Sigmoid colon (tissue), 7 donors: ENCODE measurements at regions of chr12 and their contacts with region 1.

Region 1: GRCh38 chr12:57069523-57069922 is 9.1 kb downstream of the NEMP1 start:
- DNase-seq: peak; percentile 87
- H3K4me3 ChIP-seq: no peak overlapping the region
- H3K27ac ChIP-seq: peak overlapping the region; percentile 71 to 85 (median 81)
- H3K4me1 ChIP-seq: peaks cover 0 to 32% (median 17%) of the 10 kb centered on the region in 4 donors
- H3K27me3 ChIP-seq: no peaks in the 10 kb centered on the region
- CTCF ChIP-seq: peak; percentile 86 to 96 (median 91)
- EP300 ChIP-seq: no peak
- POLR2A ChIP-seq: no peak

Region 2: GRCh38 chr12:57111031-57111734 is 41.7 kb after region 1 on chr12 and contains the start of gene STAT6:
- intact Hi-C with region 1: loop called (anchors 1 kb)
- DNase-seq: peak; percentile 94
- H3K4me3 ChIP-seq: peak within 1 kb of the TSS; percentile 59 to 83 (median 68)
- H3K27ac ChIP-seq: peak within 1 kb of the TSS; percentile 94 to 99 (median 98)
- H3K4me1 ChIP-seq: peaks cover 0 to 52% (median 47%) of the 10 kb centered on the region in 4 donors
- H3K27me3 ChIP-seq: no peaks in the 10 kb centered on the region
- CTCF ChIP-seq: peak in 1 of 4 experiments; percentile 15
- EP300 ChIP-seq: no peak
- POLR2A ChIP-seq: peak; percentile 62 to 70
- total RNA-seq, gene STAT6: 105 to 163 (median 113) TPM

Region 3: GRCh38 chr12:57124259-57124877 is 54.8 kb after region 1 on chr12:
- intact Hi-C with region 1: loop called (anchors 5 kb)
- DNase-seq: peak; percentile 88
- H3K4me3 ChIP-seq: no peak overlapping the region
- H3K27ac ChIP-seq: no peak overlapping the region
- H3K4me1 ChIP-seq: peaks cover 0 to 10% (median 9%) of the 10 kb centered on the region in 4 donors
- H3K27me3 ChIP-seq: no peaks in the 10 kb centered on the region
- CTCF ChIP-seq: peak; percentile 92 to 96 (median 96)
- EP300 ChIP-seq: no peak
- POLR2A ChIP-seq: no peak

Region 4: GRCh38 chr12:57182921-57183790 is 113.6 kb after region 1 on chr12:
- intact Hi-C with region 1: loop called (anchors 2 kb)
- DNase-seq: peak; percentile 88
- H3K4me3 ChIP-seq: no peak overlapping the region
- H3K27ac ChIP-seq: no peak overlapping the region
- H3K4me1 ChIP-seq: no peaks in the 10 kb centered on the region
- H3K27me3 ChIP-seq: no peaks in the 10 kb centered on the region
- CTCF ChIP-seq: peak; percentile 83 to 91 (median 86)
- EP300 ChIP-seq: no peak
- POLR2A ChIP-seq: no peak

Region 5: DNA sequence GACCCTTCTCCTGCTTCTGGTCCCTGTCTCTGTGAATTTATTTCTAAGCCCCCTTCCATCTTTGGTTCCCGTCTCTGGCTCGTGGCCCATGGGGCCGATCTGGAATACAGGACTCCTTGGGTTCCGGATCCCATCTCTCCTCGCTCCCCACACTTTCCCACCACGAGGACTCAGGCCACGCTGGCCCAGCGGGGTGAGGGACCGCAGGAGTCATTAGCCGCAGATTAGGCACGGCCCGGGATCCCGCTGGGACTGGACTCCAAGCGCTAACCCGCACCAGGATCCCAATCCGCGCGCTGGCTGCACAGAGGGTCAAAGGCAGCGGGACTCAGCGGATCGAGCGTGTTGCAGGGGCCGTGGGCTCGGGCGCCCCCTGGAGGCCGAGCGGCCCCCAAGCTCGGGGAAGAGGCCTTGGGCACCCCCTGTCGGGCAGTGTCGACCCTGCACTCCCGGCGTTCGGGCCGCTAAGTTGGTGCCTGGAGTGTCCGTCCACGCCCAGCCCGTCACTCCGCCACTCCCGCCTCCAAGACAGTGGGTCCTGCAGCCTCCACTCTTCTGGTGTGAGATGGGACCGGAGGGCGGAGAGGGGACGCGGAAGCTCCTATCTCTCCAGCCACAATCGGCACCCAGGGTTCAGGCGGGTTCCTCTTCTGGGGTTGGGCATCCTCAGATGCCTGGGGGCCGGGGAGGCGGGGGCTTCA is 169.5 kb after region 1 on chr12:
- intact Hi-C with region 1: loop called (anchors 5 kb)
- DNase-seq: peak; percentile 93
- H3K4me3 ChIP-seq: peak overlapping the region; percentile 26 to 50 (median 44)
- H3K27ac ChIP-seq: peak overlapping the region in 1 of 4 donors; percentile 38
- H3K4me1 ChIP-seq: peaks cover 0 to 66% (median 58%) of the 10 kb centered on the region in 4 donors
- H3K27me3 ChIP-seq: peaks cover 60 to 88% (median 84%) of the 10 kb centered on the region in 3 donors
- CTCF ChIP-seq: peak; percentile 100
- EP300 ChIP-seq: no peak
- POLR2A ChIP-seq: no peak